HAP-1 (cell line): ENCODE measurements at regions of chr3 and their contacts with region 1.

Region 1: DNA sequence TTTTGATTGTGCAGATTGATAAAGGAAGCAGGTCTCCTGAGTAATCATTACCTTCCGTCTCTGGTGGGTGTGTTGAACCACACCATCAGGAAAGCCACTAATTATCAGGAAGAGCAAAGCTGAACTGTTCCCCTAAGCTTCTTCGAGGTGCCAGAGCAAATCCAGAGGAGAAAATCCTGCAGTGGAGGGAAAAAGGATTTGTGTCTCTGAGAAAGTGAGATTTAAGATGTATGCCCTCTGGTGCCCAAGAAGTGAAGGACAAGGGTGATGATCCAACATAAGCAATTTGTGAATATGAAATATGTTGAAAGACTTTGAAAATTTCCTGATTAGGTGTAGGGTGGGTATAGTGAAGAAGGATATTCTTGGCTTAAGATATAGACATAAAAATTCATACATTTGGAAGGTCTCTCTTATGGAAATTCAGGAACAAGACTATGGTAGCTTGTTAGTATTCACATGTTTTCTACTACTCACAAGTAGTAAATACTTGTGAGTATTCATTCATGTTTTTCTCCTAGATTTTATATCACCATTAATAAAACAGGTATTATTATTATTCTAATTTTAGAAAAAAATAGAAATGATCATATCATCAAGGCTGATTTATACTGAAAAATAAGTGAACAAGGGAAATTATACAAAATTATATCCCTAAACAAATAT is 34.8 kb downstream of the COMMD2 start:
- DNase-seq: peak; percentile 76 to 82
- H3K4me3 ChIP-seq: no peak overlapping the region
- H3K4me1 ChIP-seq: peaks cover 5% of the 10 kb centered on the region; the same call in 1 of the 2 replicates
- H3K27me3 ChIP-seq: no peaks in the 10 kb centered on the region

Region 2: DNA sequence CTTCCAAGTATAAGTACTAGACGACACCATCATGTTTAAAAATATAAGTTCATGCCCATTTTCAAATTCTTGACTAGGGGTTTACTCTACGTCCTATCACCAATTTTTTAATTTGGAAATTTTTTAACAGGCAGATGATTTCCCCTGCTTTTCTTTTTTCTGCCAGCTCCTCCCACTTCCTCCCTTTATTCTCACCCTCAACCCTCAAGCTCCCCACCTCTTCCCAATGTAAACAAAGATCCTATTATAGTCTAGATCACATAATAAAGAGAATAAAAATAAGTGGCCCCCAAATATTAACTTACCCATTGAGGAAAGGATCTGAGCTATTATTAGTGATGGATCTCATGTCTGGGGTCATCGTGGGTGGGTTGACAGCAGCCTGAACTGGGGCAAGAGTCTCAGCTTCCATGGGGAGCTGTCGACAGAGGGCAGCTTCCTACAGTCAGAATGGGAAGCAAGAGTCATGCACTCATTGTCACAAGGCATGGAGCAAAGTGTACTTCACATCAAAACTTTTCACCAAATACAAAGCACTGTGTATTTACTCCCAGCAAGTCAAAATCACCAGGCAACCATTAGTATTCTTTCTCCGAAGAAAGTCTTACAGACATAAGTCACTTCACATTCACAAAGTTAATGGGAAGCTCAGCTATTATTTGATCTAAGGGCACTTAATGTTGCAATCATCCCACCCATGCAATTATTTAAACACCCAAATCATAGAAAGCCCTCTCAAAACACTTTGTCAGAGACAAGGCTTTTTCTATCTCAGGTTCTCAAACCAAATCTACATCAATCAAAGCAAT is 189.8 kb before region 1 on chr3:
- in situ Hi-C with region 1: loop called (anchors 10 kb)
- DNase-seq: no peak
- H3K4me3 ChIP-seq: no peak overlapping the region
- H3K4me1 ChIP-seq: no peaks in the 10 kb centered on the region
- H3K27me3 ChIP-seq: no peaks in the 10 kb centered on the region

Region 3: GRCh38 chr3:150733373-150733935 is 1015.9 kb after region 1 on chr3:
- in situ Hi-C with region 1: no loop called
- DNase-seq: peak in 1 of 2 experiments; percentile 30
- H3K4me3 ChIP-seq: no peak overlapping the region
- H3K4me1 ChIP-seq: peaks cover 3% of the 10 kb centered on the region; the same call in 1 of the 2 replicates
- H3K27me3 ChIP-seq: no peaks in the 10 kb centered on the region